ENCODE measurements at regions of chr20 and their contacts with region 1.

Region 1: DNA sequence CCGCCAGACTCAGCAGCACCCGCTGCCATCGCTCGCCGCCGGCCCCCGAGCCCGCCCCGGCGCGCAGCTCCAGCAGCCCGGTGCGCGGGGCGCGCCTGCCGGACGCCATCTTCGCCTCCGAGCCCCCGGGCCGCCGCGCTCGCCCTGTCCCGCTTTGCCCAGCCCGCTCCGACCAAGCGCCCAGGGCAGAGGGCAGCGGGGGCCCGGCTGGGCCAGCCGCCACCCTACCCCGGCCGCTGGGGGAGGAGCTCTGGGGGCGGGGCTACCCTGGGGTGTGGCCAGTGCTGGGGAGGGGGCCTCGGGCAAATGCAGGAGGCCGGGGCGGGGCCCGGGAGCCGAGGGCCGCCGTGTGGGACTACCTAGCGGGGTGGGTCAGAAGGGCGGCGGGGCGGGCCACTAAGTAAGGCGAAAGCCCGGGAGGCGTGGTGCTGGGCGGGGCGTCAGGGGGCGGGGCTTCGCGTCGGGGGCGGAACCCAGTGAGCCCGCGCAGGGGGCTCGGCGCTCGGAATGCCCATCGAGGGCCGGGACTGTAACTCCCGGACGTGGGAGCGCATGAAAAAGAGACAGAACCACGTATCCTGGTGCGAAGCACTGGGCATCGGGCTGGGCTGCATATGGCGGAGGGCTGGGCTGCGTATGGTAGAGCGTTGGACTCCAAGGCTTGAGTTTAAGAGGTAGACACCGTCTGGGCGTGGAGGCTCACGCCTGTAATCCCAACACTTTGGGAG is at the start of gene SNTA1:
- DNase-seq: peak; percentile 73
- H3K4me3 ChIP-seq: peak within 1 kb of the TSS; percentile 44 to 84 (median 59)
- H3K27ac ChIP-seq: peak within 1 kb of the TSS; percentile 2
- H3K4me1 ChIP-seq: peaks cover 8% of the 10 kb centered on the region
- H3K27me3 ChIP-seq: no peaks in the 10 kb centered on the region
- CTCF ChIP-seq: no peak
- total RNA-seq, gene SNTA1: 9.4 to 11.7 TPM

Region 2: GRCh38 chr20:33373735-33374605 is 69.7 kb before region 1 on chr20:
- CTCF ChIA-PET with region 1: no interaction called
- dilution Hi-C with region 1: loop called (anchors 5 kb)
- in situ Hi-C with region 1: no loop called
- intact Hi-C with region 1: no loop called
- DNase-seq: peak; percentile 46
- H3K4me3 ChIP-seq: no peak overlapping the region
- H3K27ac ChIP-seq: peak overlapping the region; percentile 77
- H3K4me1 ChIP-seq: peaks cover 26% of the 10 kb centered on the region
- H3K27me3 ChIP-seq: no peaks in the 10 kb centered on the region
- CTCF ChIP-seq: no peak

Region 3: GRCh38 chr20:33515569-33516216 is 72.0 kb after region 1 on chr20:
- CTCF ChIA-PET with region 1: interaction called, 20 read pairs
- dilution Hi-C with region 1: no loop called
- in situ Hi-C with region 1: no loop called
- intact Hi-C with region 1: no loop called
- DNase-seq: no peak
- H3K4me3 ChIP-seq: no peak overlapping the region
- H3K27ac ChIP-seq: no peak overlapping the region
- H3K4me1 ChIP-seq: no peaks in the 10 kb centered on the region
- H3K27me3 ChIP-seq: no peaks in the 10 kb centered on the region
- CTCF ChIP-seq: peak; percentile 11 to 27

Region 4: DNA sequence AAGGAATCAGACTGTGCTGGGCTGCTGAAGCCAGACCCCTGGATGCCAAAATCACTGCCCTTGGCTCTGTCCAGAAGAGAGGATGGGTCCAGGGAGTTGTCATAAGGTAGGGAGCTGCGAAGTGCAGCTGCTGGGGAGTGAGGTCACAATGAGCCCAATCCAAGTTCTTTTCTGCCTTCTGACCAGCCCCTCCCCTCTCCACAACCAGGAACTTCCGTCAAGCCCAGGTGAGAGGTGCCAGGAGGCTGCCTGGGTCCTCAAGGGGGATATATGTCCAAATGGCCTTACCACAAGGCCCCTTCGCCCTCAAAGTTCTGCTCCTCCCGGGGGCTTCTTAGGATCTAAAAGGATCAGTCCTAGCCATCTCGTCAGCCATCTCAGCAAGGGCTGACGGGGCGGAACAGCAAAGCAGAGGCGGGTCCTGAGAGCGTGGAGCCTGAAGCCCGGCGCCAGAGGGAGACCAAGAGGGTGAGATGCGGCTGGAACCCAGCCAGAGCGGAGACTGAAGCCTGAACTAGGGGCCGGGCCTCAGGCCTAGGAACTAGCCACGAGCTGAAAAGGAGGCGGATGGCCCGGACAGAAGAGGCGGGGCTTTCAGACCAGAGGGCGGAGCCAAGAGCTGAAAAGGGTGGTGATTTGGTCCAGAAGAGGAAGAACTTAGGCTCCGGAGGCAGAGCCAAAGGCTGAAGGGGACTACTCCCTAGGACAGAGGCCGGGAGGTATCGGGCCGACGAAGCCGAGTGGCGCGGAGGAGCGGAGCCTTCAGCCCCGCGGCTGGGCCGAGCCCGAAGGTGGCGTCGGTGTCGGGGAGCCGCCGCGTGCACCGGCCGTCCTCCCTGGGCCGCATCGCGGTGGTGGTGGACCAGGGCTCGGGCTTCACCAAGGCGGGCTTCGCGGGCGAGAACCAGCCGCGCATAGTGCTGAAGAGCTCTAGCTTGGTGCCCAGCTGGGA is 222.9 kb after region 1 on chr20 and contains the start of gene ACTL10:
- CTCF ChIA-PET with region 1: no interaction called
- dilution Hi-C with region 1: no loop called
- in situ Hi-C with region 1: no loop called
- intact Hi-C with region 1: no loop called
- DNase-seq: peak; percentile 76
- H3K4me3 ChIP-seq: peak within 1 kb of the TSS; percentile 26 to 52 (median 50)
- H3K27ac ChIP-seq: no peak within 1 kb of the TSS
- H3K4me1 ChIP-seq: peaks cover 31% of the 10 kb centered on the region
- H3K27me3 ChIP-seq: no peaks in the 10 kb centered on the region
- CTCF ChIP-seq: peak in 1 of 2 donors; percentile 17
- total RNA-seq, gene ACTL10: 1.4 to 2.7 TPM

Region 5: DNA sequence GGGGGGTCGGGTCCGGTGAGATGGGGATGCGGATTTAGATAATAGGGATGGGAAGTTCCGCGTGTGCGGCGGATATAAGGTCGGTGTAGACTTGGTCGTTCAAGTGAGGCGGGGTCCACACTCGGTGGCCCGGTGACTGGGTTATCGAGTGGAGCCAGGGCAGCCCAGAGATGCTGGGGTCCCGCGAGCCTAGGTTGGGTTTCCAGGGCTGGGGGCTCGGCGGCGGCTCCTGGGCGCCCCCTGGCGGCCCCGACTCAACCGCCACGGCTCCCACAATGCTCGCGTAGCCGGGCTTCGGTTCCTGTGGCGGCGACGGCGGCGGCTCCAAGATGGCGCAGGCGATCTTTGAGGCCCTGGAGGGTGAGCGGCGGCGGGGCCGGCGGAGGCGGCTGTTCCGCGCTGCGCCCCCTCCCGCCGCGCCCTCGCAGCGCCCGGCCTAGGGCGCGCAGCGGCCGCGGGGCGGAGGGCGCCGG is 288.1 kb after region 1 on chr20 and contains the start of gene ZNF341:
- CTCF ChIA-PET with region 1: no interaction called
- dilution Hi-C with region 1: no loop called
- in situ Hi-C with region 1: no loop called
- intact Hi-C with region 1: loop called (anchors 5 kb)
- DNase-seq: peak; percentile 72
- H3K4me3 ChIP-seq: peak within 1 kb of the TSS; percentile 51 to 64 (median 51)
- H3K27ac ChIP-seq: no peak within 1 kb of the TSS
- H3K4me1 ChIP-seq: peaks cover 17% of the 10 kb centered on the region
- H3K27me3 ChIP-seq: no peaks in the 10 kb centered on the region
- CTCF ChIP-seq: peak; percentile 51 to 79
- total RNA-seq, gene ZNF341: 1.0 to 4.5 TPM